Activated naive CD4-positive, alpha-beta T cell treated with anti-CD3 and anti-CD28 coated beads for 36 hours (primary cell): ENCODE measurements at regions of chr11 and their contacts with region 1.

Region 1: GRCh38 chr11:62694455-62695167 is 5.3 kb upstream of the LRRN4CL start:
- DNase-seq: peak; percentile 85
- H3K4me3 Mint-ChIP-seq: no peak overlapping the region
- H3K27ac Mint-ChIP-seq: peak overlapping the region; percentile 4
- H3K4me1 Mint-ChIP-seq: no peaks in the 10 kb centered on the region
- H3K27me3 Mint-ChIP-seq: no peaks in the 10 kb centered on the region

Region 2: GRCh38 chr11:62497132-62497915 is 197.3 kb before region 1 on chr11:
- CTCF ChIA-PET with region 1: no interaction called
- intact Hi-C with region 1: loop called (anchors 1 kb)
- DNase-seq: peak; percentile 48
- H3K4me3 Mint-ChIP-seq: no peak overlapping the region
- H3K27ac Mint-ChIP-seq: no peak overlapping the region
- H3K4me1 Mint-ChIP-seq: no peaks in the 10 kb centered on the region
- H3K27me3 Mint-ChIP-seq: peaks cover 10% of the 10 kb centered on the region

Region 3: DNA sequence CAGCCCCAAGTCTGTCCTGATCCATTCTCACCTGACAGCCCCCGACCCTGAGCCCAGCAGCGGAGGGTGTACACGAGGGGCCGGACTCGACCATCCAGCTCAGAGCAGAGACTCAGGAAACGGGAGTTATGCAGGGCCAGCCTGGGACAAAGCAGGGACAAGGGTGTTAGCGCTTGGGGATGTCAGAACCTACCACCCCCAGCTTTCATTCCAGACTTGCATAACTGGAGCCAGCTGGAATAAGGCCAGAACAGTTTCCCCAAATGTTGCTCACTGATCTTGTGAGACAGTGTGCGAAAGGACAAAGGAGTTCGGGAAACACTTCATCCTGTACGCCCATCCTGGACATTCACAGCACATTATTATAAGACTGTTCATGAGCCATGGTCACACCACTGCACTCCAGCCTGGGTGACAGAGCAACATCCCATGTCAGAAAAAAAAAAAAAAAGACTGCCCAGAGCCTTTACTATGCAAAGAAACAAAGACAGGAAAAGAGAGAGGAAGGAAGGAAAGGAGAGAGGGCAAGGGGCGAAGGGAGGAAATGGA is 117.4 kb before region 1 on chr11:
- CTCF ChIA-PET with region 1: no interaction called
- intact Hi-C with region 1: no loop called
- DNase-seq: no peak
- H3K4me3 Mint-ChIP-seq: no peak overlapping the region
- H3K27ac Mint-ChIP-seq: peak overlapping the region; percentile 6
- H3K4me1 Mint-ChIP-seq: peaks cover 20% of the 10 kb centered on the region
- H3K27me3 Mint-ChIP-seq: no peaks in the 10 kb centered on the region

Region 4: GRCh38 chr11:62612366-62613290 is 82.0 kb before region 1 on chr11 and contains the starts of genes EML3 and ROM1:
- CTCF ChIA-PET with region 1: interaction called, 4 read pairs
- intact Hi-C with region 1: loop called (anchors 1 kb)
- DNase-seq: peak; percentile 84
- H3K4me3 Mint-ChIP-seq: peak within 1 kb of the TSS; percentile 99
- H3K27ac Mint-ChIP-seq: peak within 1 kb of the TSS; percentile 98
- H3K4me1 Mint-ChIP-seq: peaks cover 54% of the 10 kb centered on the region
- H3K27me3 Mint-ChIP-seq: no peaks in the 10 kb centered on the region
- total RNA-seq, gene EML3: 81.8 to 97.1 TPM
- total RNA-seq, gene ROM1: 0.52 to 1.0 TPM

Region 5: DNA sequence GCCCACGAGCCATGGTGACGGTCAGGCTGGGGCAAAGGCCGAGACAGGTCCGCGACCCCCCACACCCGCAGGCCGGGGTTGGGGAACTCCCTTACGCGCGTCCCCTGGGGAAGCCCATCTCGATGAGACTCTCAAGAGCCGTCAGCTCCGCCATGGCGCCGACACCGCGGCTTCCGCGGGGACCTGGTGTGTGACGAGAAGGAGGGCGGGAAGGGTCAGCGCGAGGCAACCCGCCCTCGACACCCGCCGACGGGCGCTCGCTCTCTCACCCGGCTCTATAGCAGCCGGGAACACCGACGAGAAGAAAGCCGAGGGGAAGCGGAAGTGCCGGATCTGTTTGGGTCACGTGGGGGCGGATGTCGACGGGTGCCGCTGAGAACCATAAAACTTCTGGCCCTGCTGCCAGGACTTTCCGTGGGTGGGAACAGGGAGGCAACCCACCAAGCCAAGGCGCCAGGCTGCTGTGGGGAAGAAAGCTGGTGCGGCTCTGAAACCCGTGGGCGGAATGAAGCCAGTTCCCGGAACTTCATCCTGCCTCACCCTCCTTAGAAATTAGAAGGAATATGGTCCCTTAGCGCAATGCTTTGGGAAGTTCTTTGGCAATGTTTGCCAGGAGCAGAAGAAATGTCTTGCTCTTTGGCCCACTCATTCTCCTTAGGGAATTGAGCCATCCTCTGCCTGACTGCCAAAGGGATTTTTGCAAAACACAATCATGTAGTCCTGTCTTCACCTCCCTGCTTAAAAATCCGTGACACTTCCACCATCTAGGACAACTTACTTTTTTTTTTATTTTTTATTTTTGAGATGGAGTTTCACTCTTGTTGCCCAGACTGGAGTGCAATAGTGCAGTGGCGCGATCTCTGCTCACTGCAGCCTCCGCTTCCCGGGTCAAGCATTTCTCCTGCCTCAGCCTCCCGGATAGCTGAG is 15.6 kb before region 1 on chr11 and contains the start of gene UBXN1:
- CTCF ChIA-PET with region 1: interaction called, 33 read pairs
- intact Hi-C with region 1: no loop called
- DNase-seq: peak; percentile 91
- H3K4me3 Mint-ChIP-seq: peak within 1 kb of the TSS; percentile 87
- H3K27ac Mint-ChIP-seq: peak within 1 kb of the TSS; percentile 94
- H3K4me1 Mint-ChIP-seq: peaks cover 32% of the 10 kb centered on the region
- H3K27me3 Mint-ChIP-seq: no peaks in the 10 kb centered on the region
- total RNA-seq, gene UBXN1: 121 to 124 TPM

Region 6: GRCh38 chr11:63032457-63032856 is 337.8 kb after region 1 on chr11:
- CTCF ChIA-PET with region 1: no interaction called
- intact Hi-C with region 1: no loop called
- DNase-seq: no peak
- H3K4me3 Mint-ChIP-seq: no peak overlapping the region
- H3K27ac Mint-ChIP-seq: no peak overlapping the region
- H3K4me1 Mint-ChIP-seq: no peaks in the 10 kb centered on the region
- H3K27me3 Mint-ChIP-seq: peaks cover 10% of the 10 kb centered on the region